GM10248 (cell line): ENCODE measurements at regions of chr3 and their contacts with region 1.

Region 1: GRCh38 chr3:9302425-9303181 is 53.2 kb upstream of the SRGAP3 start:
- DNase-seq: peak; percentile 83
- CTCF ChIP-seq: peak; percentile 85

Region 2: GRCh38 chr3:8724108-8724782 is 578.4 kb before region 1 on chr3:
- CTCF ChIA-PET with region 1: no interaction called
- POLR2A ChIA-PET with region 1: no interaction called
- DNase-seq: no peak
- CTCF ChIP-seq: no peak

Region 3: DNA sequence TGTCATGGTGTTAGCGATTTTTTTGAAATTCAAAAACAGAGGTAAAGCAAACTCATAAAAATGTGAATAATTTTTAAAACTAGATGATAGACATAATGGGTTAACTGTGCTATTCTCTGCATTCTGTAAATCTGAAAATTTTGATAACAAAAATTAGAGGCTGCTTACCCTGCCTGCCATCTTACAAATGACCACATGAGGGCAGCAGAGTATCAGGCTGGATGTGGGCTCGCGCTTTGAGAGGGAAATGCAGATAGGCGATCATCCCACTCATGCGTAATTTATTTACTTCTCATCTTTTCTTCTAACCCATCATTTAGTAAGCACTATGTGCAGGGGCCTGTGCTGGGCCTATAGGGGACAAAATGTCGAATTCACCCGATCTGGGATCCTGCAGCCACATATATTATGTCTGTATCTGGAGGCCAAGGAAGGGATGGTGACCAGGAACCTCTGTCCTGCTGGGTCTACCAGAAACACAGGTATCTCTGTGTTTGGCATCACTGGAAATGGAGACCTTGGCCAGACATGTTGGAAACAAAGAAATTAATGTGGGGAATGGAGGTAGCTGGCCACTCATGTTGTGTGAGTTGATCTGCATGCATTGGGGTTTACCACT is 331.5 kb before region 1 on chr3:
- CTCF ChIA-PET with region 1: interaction called, 142 read pairs
- POLR2A ChIA-PET with region 1: no interaction called
- DNase-seq: peak; percentile 64
- CTCF ChIP-seq: peak; percentile 84

Region 4: DNA sequence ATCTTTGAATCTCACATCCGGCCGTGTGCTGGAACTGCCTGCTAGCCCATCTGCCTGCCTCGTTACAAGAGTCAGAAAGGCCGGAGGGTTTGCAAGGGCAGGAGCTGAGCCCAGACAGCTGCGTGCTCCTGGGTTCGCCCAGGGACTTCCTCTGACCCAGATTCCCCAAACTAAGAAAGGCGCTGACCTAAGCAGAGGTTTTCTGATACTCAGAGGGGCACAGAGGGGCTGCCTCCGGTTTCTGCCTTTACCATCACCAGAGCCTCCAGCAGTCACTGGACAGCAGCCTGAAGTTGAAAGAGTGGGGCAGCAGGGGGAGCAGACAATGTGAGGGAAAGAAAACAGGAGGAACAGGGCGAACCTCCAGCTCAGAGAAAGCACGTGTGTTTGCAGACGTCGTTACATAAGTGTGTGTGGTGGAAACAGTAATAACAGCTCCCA is 305.9 kb before region 1 on chr3:
- CTCF ChIA-PET with region 1: interaction called, 12 read pairs
- POLR2A ChIA-PET with region 1: no interaction called
- DNase-seq: no peak
- CTCF ChIP-seq: no peak

Region 5: GRCh38 chr3:9280451-9281219 is 22.0 kb before region 1 on chr3:
- CTCF ChIA-PET with region 1: interaction called, 19 read pairs
- POLR2A ChIA-PET with region 1: no interaction called
- DNase-seq: no peak
- CTCF ChIP-seq: no peak

Region 6: GRCh38 chr3:9314796-9315195 is 12.2 kb after region 1 on chr3:
- CTCF ChIA-PET with region 1: interaction called, 45 read pairs
- POLR2A ChIA-PET with region 1: no interaction called
- DNase-seq: no peak
- CTCF ChIP-seq: no peak

Region 7: GRCh38 chr3:9352917-9353752 is 50.5 kb after region 1 on chr3:
- CTCF ChIA-PET with region 1: no interaction called
- POLR2A ChIA-PET with region 1: no interaction called
- DNase-seq: peak; percentile 62
- CTCF ChIP-seq: peak; percentile 82